ENCODE measurements at regions of chr15 and their contacts with region 1.

Region 1: GRCh38 chr15:69394556-69395282 is 19.4 kb upstream of the KIF23 start:
- DNase-seq: peak; percentile 61 to 75 (median 68)
- H3K4me3 ChIP-seq: no peak overlapping the region
- H3K4me3 Mint-ChIP-seq: peak overlapping the region in 2 of 8 donors; percentile 26 to 29
- H3K27ac ChIP-seq: no peak overlapping the region
- H3K27ac Mint-ChIP-seq: peak overlapping the region in 1 of 7 donors; percentile 11
- H3K4me1 ChIP-seq: peaks cover 6% of the 10 kb centered on the region
- H3K4me1 Mint-ChIP-seq: peaks cover 5 to 16% (median 7%) of the 10 kb centered on the region in 4 donors
- H3K27me3 ChIP-seq: no peaks in the 10 kb centered on the region
- H3K27me3 Mint-ChIP-seq: peaks cover 6 to 10% of the 10 kb centered on the region in 2 donors

Region 2: DNA sequence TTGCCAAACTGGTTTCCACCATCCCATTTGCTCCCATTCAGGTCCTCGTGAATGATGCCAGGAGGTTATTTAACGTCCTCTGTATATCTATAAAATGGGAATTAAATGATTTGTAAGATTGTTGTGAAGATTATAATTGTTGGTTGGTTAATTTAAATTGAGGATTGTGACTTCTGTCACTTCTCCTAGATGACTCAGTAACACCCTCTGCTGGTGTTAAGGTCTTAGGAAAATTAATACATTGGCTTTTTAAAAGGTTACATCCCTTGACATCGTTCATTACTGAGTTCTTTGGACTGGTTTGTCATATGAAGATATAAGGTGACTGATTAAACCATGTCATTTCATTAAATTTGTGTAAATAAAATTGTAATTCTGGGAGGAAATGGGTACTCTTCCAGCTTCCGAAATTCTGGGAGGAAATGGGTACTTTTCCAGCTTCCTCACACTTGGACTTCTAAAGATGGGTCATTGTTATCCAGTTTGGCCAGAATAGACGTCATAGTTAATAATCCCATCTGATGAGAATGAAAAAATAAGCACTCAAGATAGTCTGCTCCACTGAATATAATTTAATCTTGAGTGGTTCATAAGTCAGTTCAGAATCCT is 129.3 kb before region 1 on chr15:
- CTCF ChIA-PET with region 1: no interaction called
- POLR2A ChIA-PET with region 1: no interaction called
- intact Hi-C with region 1: no loop called
- DNase-seq: peak in 4 of 5 donors; percentile 6 to 20 (median 14)
- H3K4me3 ChIP-seq: no peak overlapping the region
- H3K4me3 Mint-ChIP-seq: no peak overlapping the region
- H3K27ac ChIP-seq: no peak overlapping the region
- H3K27ac Mint-ChIP-seq: no peak overlapping the region
- H3K4me1 ChIP-seq: no peaks in the 10 kb centered on the region
- H3K4me1 Mint-ChIP-seq: no peaks in the 10 kb centered on the region
- H3K27me3 ChIP-seq: no peaks in the 10 kb centered on the region
- H3K27me3 Mint-ChIP-seq: no peaks in the 10 kb centered on the region

Region 3: DNA sequence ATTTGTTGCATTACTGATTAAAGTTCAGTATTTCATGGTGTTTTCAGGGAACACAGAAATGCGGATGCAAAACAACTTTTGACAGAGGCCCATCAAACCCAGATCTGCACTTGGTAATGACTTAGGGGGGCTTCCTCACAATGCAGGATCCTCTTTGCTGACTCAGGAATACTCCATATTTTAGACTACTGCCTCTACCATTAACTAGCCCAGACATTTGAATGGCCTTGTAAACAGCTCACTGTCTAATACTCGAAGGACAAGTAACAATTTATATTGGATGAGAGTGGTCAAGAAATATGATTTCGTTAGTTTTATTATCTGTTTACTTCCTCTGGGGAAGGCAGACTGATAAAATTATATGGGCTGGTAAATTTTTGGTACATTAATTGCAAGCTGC is 10.4 kb after region 1 on chr15:
- CTCF ChIA-PET with region 1: interaction called, 12 read pairs
- POLR2A ChIA-PET with region 1: no interaction called
- intact Hi-C with region 1: no loop called
- DNase-seq: no peak
- H3K4me3 ChIP-seq: no peak overlapping the region
- H3K4me3 Mint-ChIP-seq: no peak overlapping the region
- H3K27ac ChIP-seq: no peak overlapping the region
- H3K27ac Mint-ChIP-seq: no peak overlapping the region
- H3K4me1 ChIP-seq: no peaks in the 10 kb centered on the region
- H3K4me1 Mint-ChIP-seq: no peaks in the 10 kb centered on the region
- H3K27me3 ChIP-seq: no peaks in the 10 kb centered on the region
- H3K27me3 Mint-ChIP-seq: peaks cover 1 to 20% of the 10 kb centered on the region in 2 donors